A549 (cell line): ENCODE measurements at regions of chr2 and their contacts with region 1.

Region 1: GRCh38 chr2:29405707-29406106 is 290.5 kb downstream of the CLIP4 start:
- DNase-seq: no peak
- ATAC-seq: no peak
- H3K4me3 ChIP-seq: no peak overlapping the region
- H3K27ac ChIP-seq: no peak overlapping the region
- H3K4me1 ChIP-seq: no peaks in the 10 kb centered on the region
- CTCF ChIP-seq: no peak
- EP300 ChIP-seq: no peak
- POLR2A ChIP-seq: no peak
- RAD21 ChIP-seq: no peak

Region 2: GRCh38 chr2:29367986-29368658 is 37.6 kb before region 1 on chr2:
- CTCF ChIA-PET with region 1: no interaction called
- POLR2A ChIA-PET with region 1: no interaction called
- DNase-seq: no peak
- ATAC-seq: no peak
- H3K4me3 ChIP-seq: no peak overlapping the region
- H3K27ac ChIP-seq: no peak overlapping the region
- H3K4me1 ChIP-seq: no peaks in the 10 kb centered on the region
- CTCF ChIP-seq: no peak
- EP300 ChIP-seq: no peak
- POLR2A ChIP-seq: no peak
- RAD21 ChIP-seq: no peak

Region 3: GRCh38 chr2:29417630-29418029 is 11.9 kb after region 1 on chr2:
- CTCF ChIA-PET with region 1: interaction called, 12 read pairs
- POLR2A ChIA-PET with region 1: no interaction called
- DNase-seq: no peak
- ATAC-seq: peak in 1 of 2 experiments; percentile 72; a peak in 3 of 6 replicates
- H3K4me3 ChIP-seq: no peak overlapping the region
- H3K27ac ChIP-seq: no peak overlapping the region
- H3K4me1 ChIP-seq: no peaks in the 10 kb centered on the region
- CTCF ChIP-seq: no peak
- EP300 ChIP-seq: no peak
- POLR2A ChIP-seq: no peak
- RAD21 ChIP-seq: no peak